Adrenal gland (tissue), 19 donors: ENCODE measurements at regions of chr7 and their contacts with region 1.

Region 1: DNA sequence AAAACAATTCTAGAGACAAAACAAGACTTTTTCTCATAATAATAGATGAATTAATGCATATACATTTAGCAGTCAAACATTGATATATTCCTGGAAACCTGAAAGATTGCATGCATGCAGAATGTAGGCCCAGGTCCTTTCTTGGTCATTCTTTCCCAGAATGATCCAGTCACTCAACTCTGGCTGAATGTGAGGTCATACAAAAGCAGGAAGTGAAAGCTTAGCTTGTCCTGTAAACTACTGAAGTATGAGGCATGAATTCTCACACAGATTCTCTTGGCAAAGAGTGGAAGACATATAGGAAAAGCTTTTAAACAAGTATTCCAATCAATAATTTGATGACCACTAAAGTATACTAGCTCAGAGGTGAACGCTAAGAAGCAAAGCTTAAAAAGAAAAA is 253.9 kb downstream of the PPP1R3A start:
- DNase-seq: no peak
- H3K4me3 ChIP-seq: no peak overlapping the region
- H3K27ac ChIP-seq: no peak overlapping the region
- H3K4me1 ChIP-seq: no peaks in the 10 kb centered on the region
- H3K27me3 ChIP-seq: no peaks in the 10 kb centered on the region
- CTCF ChIP-seq: no peak
- POLR2A ChIP-seq: no peak

Region 2: GRCh38 chr7:113622796-113623195 is 42.1 kb before region 1 on chr7:
- intact Hi-C with region 1: loop called in 1 of 2 experiments (anchors 5 kb)
- DNase-seq: no peak
- H3K4me3 ChIP-seq: no peak overlapping the region
- H3K27ac ChIP-seq: no peak overlapping the region
- H3K4me1 ChIP-seq: no peaks in the 10 kb centered on the region
- H3K27me3 ChIP-seq: no peaks in the 10 kb centered on the region
- CTCF ChIP-seq: no peak
- POLR2A ChIP-seq: no peak

Region 3: GRCh38 chr7:113986209-113986608 is 321.3 kb after region 1 on chr7:
- intact Hi-C with region 1: no loop called
- DNase-seq: no peak
- H3K4me3 ChIP-seq: no peak overlapping the region
- H3K27ac ChIP-seq: no peak overlapping the region
- H3K4me1 ChIP-seq: no peaks in the 10 kb centered on the region
- H3K27me3 ChIP-seq: no peaks in the 10 kb centered on the region
- CTCF ChIP-seq: no peak
- POLR2A ChIP-seq: no peak